Naive thymus-derived CD4-positive, alpha-beta T cell (primary cell): ENCODE measurements at regions of chr10 and their contacts with region 1.

Region 1: GRCh38 chr10:125343118-125343925 is 183.0 kb upstream of the CTBP2 start:
- DNase-seq: no peak
- ATAC-seq: no peak
- H3K4me3 ChIP-seq: no peak overlapping the region
- H3K4me3 Mint-ChIP-seq: no peak overlapping the region
- H3K27ac ChIP-seq: no peak overlapping the region
- H3K27ac Mint-ChIP-seq: no peak overlapping the region
- H3K4me1 ChIP-seq: no peaks in the 10 kb centered on the region
- H3K4me1 Mint-ChIP-seq: peaks cover 0 to 5% (median 0%) of the 10 kb centered on the region in 7 donors
- H3K27me3 ChIP-seq: peaks cover 0 to 3% of the 10 kb centered on the region in 2 donors
- H3K27me3 Mint-ChIP-seq: peaks cover 0 to 18% (median 4%) of the 10 kb centered on the region in 5 donors

Region 2: DNA sequence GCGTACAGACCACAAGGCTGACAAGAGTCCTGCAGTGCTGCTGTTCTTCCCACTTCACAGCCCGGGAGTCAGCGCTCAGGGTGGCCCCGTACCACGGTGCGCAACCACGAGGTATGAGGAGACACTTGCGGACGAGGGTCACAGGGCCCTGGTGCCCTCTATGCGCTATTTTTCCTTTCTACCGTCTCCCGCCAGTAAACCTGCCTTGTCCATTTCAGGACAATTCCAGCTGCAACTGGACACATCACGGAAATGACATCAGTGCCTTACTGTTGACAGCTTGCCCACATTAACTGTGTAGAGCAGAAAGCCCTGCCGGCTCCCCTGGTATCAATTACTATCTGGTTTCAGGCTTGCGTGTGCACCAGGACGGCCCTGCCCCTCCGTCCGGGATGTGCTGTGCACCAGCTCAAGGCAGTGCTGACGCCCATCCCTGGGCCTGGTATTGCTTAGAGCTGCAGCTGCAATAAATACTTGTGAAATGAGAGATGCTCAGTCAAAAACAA is 336.3 kb before region 1 on chr10:
- CTCF ChIA-PET with region 1: no interaction called
- POLR2A ChIA-PET with region 1: no interaction called
- intact Hi-C with region 1: no loop called
- DNase-seq: no peak
- ATAC-seq: no peak
- H3K4me3 ChIP-seq: no peak overlapping the region
- H3K4me3 Mint-ChIP-seq: no peak overlapping the region
- H3K27ac ChIP-seq: no peak overlapping the region
- H3K27ac Mint-ChIP-seq: no peak overlapping the region
- H3K4me1 ChIP-seq: no peaks in the 10 kb centered on the region
- H3K4me1 Mint-ChIP-seq: no peaks in the 10 kb centered on the region
- H3K27me3 ChIP-seq: no peaks in the 10 kb centered on the region
- H3K27me3 Mint-ChIP-seq: peaks cover 0 to 4% (median 0%) of the 10 kb centered on the region in 5 donors

Region 3: GRCh38 chr10:125048101-125048864 is 295.0 kb before region 1 on chr10:
- CTCF ChIA-PET with region 1: no interaction called
- POLR2A ChIA-PET with region 1: no interaction called
- intact Hi-C with region 1: loop called in 1 of 2 experiments (anchors 5 kb)
- DNase-seq: peak in 6 of 9 donors; percentile 12 to 69 (median 20)
- ATAC-seq: peak; percentile 91
- H3K4me3 ChIP-seq: no peak overlapping the region
- H3K4me3 Mint-ChIP-seq: no peak overlapping the region
- H3K27ac ChIP-seq: no peak overlapping the region
- H3K27ac Mint-ChIP-seq: no peak overlapping the region
- H3K4me1 ChIP-seq: no peaks in the 10 kb centered on the region
- H3K4me1 Mint-ChIP-seq: peaks cover 0 to 7% (median 0%) of the 10 kb centered on the region in 7 donors
- H3K27me3 ChIP-seq: no peaks in the 10 kb centered on the region
- H3K27me3 Mint-ChIP-seq: peaks cover 0 to 8% (median 0%) of the 10 kb centered on the region in 5 donors

Region 4: GRCh38 chr10:125248489-125248888 is 94.8 kb before region 1 on chr10:
- CTCF ChIA-PET with region 1: no interaction called
- POLR2A ChIA-PET with region 1: no interaction called
- intact Hi-C with region 1: no loop called
- DNase-seq: no peak
- ATAC-seq: no peak
- H3K4me3 ChIP-seq: no peak overlapping the region
- H3K4me3 Mint-ChIP-seq: no peak overlapping the region
- H3K27ac ChIP-seq: no peak overlapping the region
- H3K27ac Mint-ChIP-seq: no peak overlapping the region
- H3K4me1 ChIP-seq: no peaks in the 10 kb centered on the region
- H3K4me1 Mint-ChIP-seq: peaks cover 0 to 2% (median 0%) of the 10 kb centered on the region in 7 donors
- H3K27me3 ChIP-seq: no peaks in the 10 kb centered on the region
- H3K27me3 Mint-ChIP-seq: peaks cover 0 to 13% (median 10%) of the 10 kb centered on the region in 5 donors

Region 5: GRCh38 chr10:125415006-125415633 is 71.8 kb after region 1 on chr10:
- CTCF ChIA-PET with region 1: no interaction called
- POLR2A ChIA-PET with region 1: no interaction called
- intact Hi-C with region 1: no loop called
- DNase-seq: no peak
- ATAC-seq: no peak
- H3K4me3 ChIP-seq: no peak overlapping the region
- H3K4me3 Mint-ChIP-seq: no peak overlapping the region
- H3K27ac ChIP-seq: no peak overlapping the region
- H3K27ac Mint-ChIP-seq: no peak overlapping the region
- H3K4me1 ChIP-seq: no peaks in the 10 kb centered on the region
- H3K4me1 Mint-ChIP-seq: peaks cover 0 to 1% (median 0%) of the 10 kb centered on the region in 7 donors
- H3K27me3 ChIP-seq: no peaks in the 10 kb centered on the region
- H3K27me3 Mint-ChIP-seq: peaks cover 0 to 10% (median 7%) of the 10 kb centered on the region in 5 donors